ENCODE measurements at regions of chr3 and their contacts with region 1.

Region 1: GRCh38 chr3:15797642-15798303 is at the start of gene ANKRD28:
- DNase-seq: peak; percentile 31 to 76 (median 46)
- ATAC-seq: peak; percentile 83
- H3K4me3 ChIP-seq: peak within 1 kb of the TSS; percentile 30
- H3K27ac ChIP-seq: peak within 1 kb of the TSS; percentile 82
- H3K4me1 ChIP-seq: peaks cover 0 to 31% of the 10 kb centered on the region in 2 experiments; a peak in 4 of 5 replicates
- H3K27me3 ChIP-seq: no peaks in the 10 kb centered on the region
- CTCF ChIP-seq: peak in 2 of 3 experiments; percentile 10 to 47; a peak in 2 of 6 replicates
- EP300 ChIP-seq: peak; percentile 73
- POLR2A ChIP-seq: peak; percentile 51; the same call in 1 of the 2 replicates
- RAD21 ChIP-seq: no peak; a peak in 1 of 4 replicates
- polyA plus RNA-seq, gene ANKRD28: 11.7 to 13.4 TPM

Region 2: GRCh38 chr3:15769256-15769915 is 28.4 kb before region 1 on chr3:
- CTCF ChIA-PET with region 1: no interaction called
- POLR2A ChIA-PET with region 1: interaction called, 11 read pairs
- in situ Hi-C with region 1: no loop called
- intact Hi-C with region 1: no loop called
- DNase-seq: no peak
- ATAC-seq: no peak
- H3K4me3 ChIP-seq: no peak overlapping the region
- H3K27ac ChIP-seq: no peak overlapping the region
- H3K4me1 ChIP-seq: no peaks in the 10 kb centered on the region
- H3K27me3 ChIP-seq: no peaks in the 10 kb centered on the region
- CTCF ChIP-seq: no peak
- EP300 ChIP-seq: no peak
- POLR2A ChIP-seq: no peak
- RAD21 ChIP-seq: no peak

Region 3: DNA sequence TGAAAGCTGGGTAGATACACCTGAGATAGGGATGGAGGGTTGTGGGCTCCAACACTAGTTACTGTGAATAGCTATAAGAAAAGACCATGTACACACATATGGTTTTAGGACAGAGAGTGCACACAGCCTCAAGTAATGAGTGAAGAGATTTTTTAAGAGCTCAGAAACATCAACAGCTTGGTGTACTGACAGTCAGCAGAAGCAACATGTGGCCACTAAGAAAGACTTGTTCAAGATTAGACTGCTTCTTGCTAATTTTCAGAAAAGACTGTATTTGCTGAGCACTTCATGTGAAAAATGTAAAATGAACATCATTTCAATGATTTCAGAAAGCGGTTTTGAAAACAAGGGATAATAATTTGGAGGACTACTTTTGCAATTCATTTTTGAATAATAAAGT is 10.2 kb before region 1 on chr3:
- CTCF ChIA-PET with region 1: no interaction called
- POLR2A ChIA-PET with region 1: interaction called, 16 read pairs
- in situ Hi-C with region 1: no loop called
- intact Hi-C with region 1: no loop called
- DNase-seq: no peak
- ATAC-seq: peak; percentile 48
- H3K4me3 ChIP-seq: no peak overlapping the region
- H3K27ac ChIP-seq: no peak overlapping the region
- H3K4me1 ChIP-seq: peaks cover 0 to 10% of the 10 kb centered on the region in 2 experiments; a peak in 3 of 5 replicates
- H3K27me3 ChIP-seq: no peaks in the 10 kb centered on the region
- CTCF ChIP-seq: no peak
- EP300 ChIP-seq: no peak
- POLR2A ChIP-seq: no peak
- RAD21 ChIP-seq: no peak

Region 4: DNA sequence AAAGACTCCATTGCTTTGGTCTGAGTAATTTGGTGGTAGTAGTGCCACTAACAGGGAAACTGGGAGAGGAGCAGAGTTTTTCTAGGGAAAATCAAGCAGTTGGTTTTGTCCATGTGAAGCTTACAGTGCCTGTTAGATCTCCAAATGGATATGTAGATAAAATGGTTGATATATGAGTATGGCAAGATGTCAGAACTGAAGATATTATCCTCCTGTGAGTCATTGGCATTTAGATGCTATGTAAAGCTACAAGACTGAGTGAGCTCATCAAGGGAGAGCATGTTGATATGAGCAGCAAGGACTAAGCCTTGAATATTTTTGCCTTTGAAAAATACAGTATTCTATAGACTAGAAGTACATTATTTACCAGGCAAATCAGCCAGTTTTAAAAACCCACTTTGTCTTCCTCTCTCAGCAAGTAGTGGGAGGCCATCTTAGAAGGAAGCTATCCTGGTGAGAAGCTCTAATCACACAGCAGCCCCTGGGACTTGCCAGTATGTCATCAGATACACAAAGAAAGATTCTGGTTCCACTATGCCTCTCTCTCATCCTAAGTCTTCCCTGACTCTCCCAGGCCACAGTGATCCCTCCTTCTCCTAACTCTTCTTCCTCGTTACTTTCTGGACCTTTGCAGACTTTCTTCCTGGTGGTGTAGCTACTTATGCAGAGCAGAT is 77.4 kb after region 1 on chr3:
- CTCF ChIA-PET with region 1: no interaction called
- POLR2A ChIA-PET with region 1: no interaction called
- in situ Hi-C with region 1: no loop called
- intact Hi-C with region 1: no loop called
- DNase-seq: no peak
- ATAC-seq: no peak; the same call in 2 of the 3 replicates
- H3K4me3 ChIP-seq: no peak overlapping the region
- H3K27ac ChIP-seq: no peak overlapping the region
- H3K4me1 ChIP-seq: peaks cover 6% of the 10 kb centered on the region in 2 experiments; a peak in 3 of 5 replicates
- H3K27me3 ChIP-seq: no peaks in the 10 kb centered on the region
- CTCF ChIP-seq: no peak
- EP300 ChIP-seq: no peak
- POLR2A ChIP-seq: no peak
- RAD21 ChIP-seq: no peak

Region 5: GRCh38 chr3:15953841-15954240 is 156.1 kb after region 1 on chr3:
- CTCF ChIA-PET with region 1: no interaction called
- POLR2A ChIA-PET with region 1: no interaction called
- in situ Hi-C with region 1: no loop called
- intact Hi-C with region 1: no loop called
- DNase-seq: peak; percentile 13 to 45 (median 34)
- ATAC-seq: peak; percentile 79
- H3K4me3 ChIP-seq: no peak overlapping the region
- H3K27ac ChIP-seq: no peak overlapping the region
- H3K4me1 ChIP-seq: no peaks in the 10 kb centered on the region
- H3K27me3 ChIP-seq: peaks cover 4 to 19% of the 10 kb centered on the region in 2 experiments; a peak in 4 of 5 replicates
- CTCF ChIP-seq: peak in 2 of 3 experiments; percentile 25 to 37; a peak in 3 of 6 replicates
- EP300 ChIP-seq: no peak
- POLR2A ChIP-seq: no peak
- RAD21 ChIP-seq: 0 out of 4 replicates have a peak, but pooled peaks of 1 of the 2 experiments have one; percentile 13

Region 6: DNA sequence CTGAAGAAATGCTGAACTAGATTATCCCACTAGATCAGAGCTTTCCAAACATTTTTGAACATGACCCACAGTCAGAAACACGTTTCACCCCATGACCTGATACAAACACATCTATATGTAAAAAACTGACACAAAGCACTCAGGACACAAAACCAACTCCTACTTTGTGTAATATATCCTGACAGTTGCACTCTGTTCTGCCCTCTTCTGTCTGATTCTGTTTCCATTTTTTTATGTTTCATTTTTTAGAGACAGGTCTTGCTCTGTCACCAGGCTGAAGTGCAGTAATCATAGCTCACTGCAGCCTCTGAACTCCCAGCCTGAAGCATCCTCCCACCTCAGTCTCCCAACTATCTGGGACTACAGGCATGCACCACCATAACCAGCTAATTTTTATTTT is 731.5 kb after region 1 on chr3:
- CTCF ChIA-PET with region 1: no interaction called
- POLR2A ChIA-PET with region 1: no interaction called
- in situ Hi-C with region 1: no loop called
- intact Hi-C with region 1: no loop called
- DNase-seq: no peak
- ATAC-seq: peak; percentile 24; the same call in 1 of the 3 replicates
- H3K4me3 ChIP-seq: no peak overlapping the region
- H3K27ac ChIP-seq: no peak overlapping the region
- H3K4me1 ChIP-seq: no peaks in the 10 kb centered on the region
- H3K27me3 ChIP-seq: peaks cover 27 to 45% of the 10 kb centered on the region in 2 experiments; a peak in 4 of 5 replicates
- CTCF ChIP-seq: no peak
- EP300 ChIP-seq: no peak
- POLR2A ChIP-seq: no peak
- RAD21 ChIP-seq: no peak; a peak in 1 of 4 replicates